Right ventricle myocardium inferior (tissue), 1 donor: ENCODE measurements at regions of chr15 and their contacts with region 1.

Region 1: DNA sequence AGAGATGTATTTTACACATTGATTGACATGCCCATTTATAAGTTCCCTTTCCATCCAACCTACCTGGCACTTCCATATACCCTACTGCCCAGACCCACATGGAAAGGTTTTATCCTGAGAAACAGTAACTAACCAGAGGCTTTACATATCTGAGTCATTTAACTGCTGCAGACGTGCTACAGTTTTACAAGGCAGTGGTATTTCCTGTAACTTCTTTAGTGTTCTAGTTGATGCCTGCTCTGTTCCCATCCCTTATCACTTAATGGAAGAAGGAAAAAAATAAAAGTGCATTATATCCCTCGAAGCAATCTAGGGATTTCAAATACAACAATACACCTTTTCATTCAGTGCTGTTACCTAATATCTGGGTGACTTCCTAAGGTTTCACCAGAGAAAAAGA is 107.1 kb downstream of the TMCO5A start:
- DNase-seq: no peak
- ATAC-seq: no peak

Region 2: DNA sequence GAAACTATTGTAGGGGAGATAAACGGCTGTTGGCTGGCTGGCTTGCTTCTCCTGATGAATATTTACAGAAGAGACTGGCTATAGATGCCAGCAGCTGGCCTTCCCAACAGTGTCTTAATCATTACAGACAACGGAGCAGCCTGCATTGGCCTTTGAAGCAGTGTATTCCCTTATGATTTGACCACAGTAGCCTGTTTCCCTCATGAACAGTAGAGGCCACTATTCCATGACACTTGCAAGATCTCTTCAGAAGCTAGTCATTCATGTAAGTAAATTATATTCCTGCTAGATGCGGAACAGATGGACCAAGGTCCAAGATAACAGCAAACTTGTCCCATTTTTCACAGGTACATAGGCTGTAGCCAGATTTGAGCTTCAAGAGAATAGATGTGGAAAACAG is 59.8 kb before region 1 on chr15:
- intact Hi-C with region 1: loop called (anchors 10 kb)
- DNase-seq: no peak
- ATAC-seq: peak; percentile 63

Region 3: GRCh38 chr15:38176155-38176554 is 134.6 kb after region 1 on chr15:
- intact Hi-C with region 1: no loop called
- DNase-seq: no peak
- ATAC-seq: no peak